CD4-positive, alpha-beta T cell (primary cell): ENCODE measurements at regions of chr16 and their contacts with region 1.

Region 1: DNA sequence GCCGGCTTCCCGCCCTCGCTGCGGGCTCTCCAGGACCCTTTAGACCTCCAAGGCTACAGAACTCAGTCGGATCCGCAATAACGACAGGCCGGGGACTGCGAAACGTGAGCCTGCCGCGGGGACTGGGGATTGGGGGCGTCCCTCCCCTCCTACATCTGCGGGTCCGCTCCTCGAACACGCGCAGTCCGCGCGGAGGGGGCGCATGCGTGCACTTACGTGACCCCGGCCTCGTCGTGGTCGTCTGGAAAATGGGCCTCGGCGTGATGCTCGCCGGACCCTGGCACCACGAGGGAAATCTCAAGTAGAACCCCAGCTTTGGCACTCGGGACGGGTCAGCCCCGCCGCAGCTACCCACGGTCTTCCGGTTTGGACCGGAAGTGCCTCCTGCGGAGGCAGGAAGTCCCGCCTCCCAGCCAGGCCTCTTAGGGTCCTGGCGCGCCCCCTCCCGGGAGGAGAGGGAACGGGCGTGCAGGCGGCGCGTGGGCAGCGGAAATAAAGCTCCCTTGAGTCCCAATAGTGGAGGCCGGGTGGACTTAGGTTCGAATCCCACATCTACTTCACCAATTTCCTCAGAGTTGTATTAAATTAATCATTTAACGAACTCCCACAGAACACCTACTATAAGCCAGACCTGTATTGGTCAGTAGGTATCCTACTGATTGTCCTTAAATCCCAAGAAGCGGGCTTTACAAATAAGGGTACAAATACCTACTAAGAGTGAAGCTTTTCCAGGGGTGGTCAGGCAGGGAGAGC is at the start of gene TAF1C:
- DNase-seq: peak; percentile 78 to 97 (median 88)
- ATAC-seq: peak; percentile 95
- H3K4me3 ChIP-seq: peak within 1 kb of the TSS; percentile 71
- H3K4me3 Mint-ChIP-seq: peak within 1 kb of the TSS; percentile 96
- H3K27ac ChIP-seq: peak within 1 kb of the TSS; percentile 60 to 72
- H3K27ac Mint-ChIP-seq: peak within 1 kb of the TSS; percentile 88
- H3K4me1 ChIP-seq: peaks cover 24% of the 10 kb centered on the region
- H3K4me1 Mint-ChIP-seq: peaks cover 29% of the 10 kb centered on the region
- H3K27me3 ChIP-seq: no peaks in the 10 kb centered on the region
- H3K27me3 Mint-ChIP-seq: no peaks in the 10 kb centered on the region
- CTCF ChIP-seq: peak; percentile 94
- total RNA-seq, gene TAF1C: 75.6 to 82.1 TPM

Region 2: GRCh38 chr16:83807710-83808572 is 378.9 kb before region 1 on chr16 and contains the start of gene HSBP1:
- CTCF ChIA-PET with region 1: interaction called, 4 read pairs
- POLR2A ChIA-PET with region 1: interaction called, 6 read pairs
- intact Hi-C with region 1: loop called in 1 of 2 experiments (anchors 5 kb)
- DNase-seq: peak; percentile 89 to 96 (median 91)
- ATAC-seq: peak; percentile 99
- H3K4me3 ChIP-seq: peak within 1 kb of the TSS; percentile 86
- H3K4me3 Mint-ChIP-seq: peak within 1 kb of the TSS; percentile 100
- H3K27ac ChIP-seq: peak within 1 kb of the TSS; percentile 46 to 74
- H3K27ac Mint-ChIP-seq: peak within 1 kb of the TSS; percentile 93
- H3K4me1 ChIP-seq: peaks cover 28% of the 10 kb centered on the region
- H3K4me1 Mint-ChIP-seq: peaks cover 43% of the 10 kb centered on the region
- H3K27me3 ChIP-seq: no peaks in the 10 kb centered on the region
- H3K27me3 Mint-ChIP-seq: no peaks in the 10 kb centered on the region
- CTCF ChIP-seq: no peak
- total RNA-seq, gene HSBP1: 17.4 to 21.9 TPM

Region 3: DNA sequence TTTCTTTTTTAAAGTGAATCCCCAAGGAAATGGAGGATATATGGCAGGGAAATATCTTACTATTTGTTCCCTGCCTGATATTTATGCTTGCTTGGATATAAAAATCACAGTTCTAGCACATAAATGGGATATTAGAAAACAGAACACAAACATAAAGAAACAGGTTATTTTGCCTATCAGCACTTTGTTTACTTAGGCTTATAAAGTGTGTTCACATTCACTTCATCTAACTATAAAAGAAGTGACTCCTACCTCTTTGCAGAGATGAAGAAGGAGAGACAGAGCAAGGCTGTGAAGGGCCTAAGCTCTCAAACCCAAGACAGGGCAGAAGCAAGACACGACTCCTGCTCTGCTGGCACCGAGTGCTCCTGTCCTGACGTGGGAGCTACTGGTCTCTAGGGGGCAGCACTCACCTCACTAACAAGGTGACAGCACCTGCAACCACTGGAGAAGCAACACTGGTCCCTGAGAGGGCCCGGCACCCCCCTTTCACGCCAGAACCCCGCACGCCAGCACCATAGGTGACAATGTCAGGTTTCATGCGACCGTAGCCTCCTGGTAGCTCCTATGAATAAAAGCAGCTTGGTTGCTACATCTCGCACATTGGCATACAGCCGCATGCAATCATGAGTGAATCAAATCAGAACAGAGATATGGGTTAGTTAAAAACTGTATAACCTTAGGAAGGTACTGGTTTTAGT is 102.1 kb before region 1 on chr16:
- CTCF ChIA-PET with region 1: interaction called, 65 read pairs
- POLR2A ChIA-PET with region 1: interaction called, 8 read pairs
- intact Hi-C with region 1: loop called (anchors 1 kb)
- DNase-seq: peak; percentile 50 to 87 (median 64)
- ATAC-seq: peak; percentile 85
- H3K4me3 ChIP-seq: no peak overlapping the region
- H3K4me3 Mint-ChIP-seq: peak overlapping the region; percentile 42
- H3K27ac ChIP-seq: no peak overlapping the region
- H3K27ac Mint-ChIP-seq: peak overlapping the region; percentile 63
- H3K4me1 ChIP-seq: peaks cover 28% of the 10 kb centered on the region
- H3K4me1 Mint-ChIP-seq: peaks cover 48% of the 10 kb centered on the region
- H3K27me3 ChIP-seq: no peaks in the 10 kb centered on the region
- H3K27me3 Mint-ChIP-seq: no peaks in the 10 kb centered on the region
- CTCF ChIP-seq: peak; percentile 81

Region 4: DNA sequence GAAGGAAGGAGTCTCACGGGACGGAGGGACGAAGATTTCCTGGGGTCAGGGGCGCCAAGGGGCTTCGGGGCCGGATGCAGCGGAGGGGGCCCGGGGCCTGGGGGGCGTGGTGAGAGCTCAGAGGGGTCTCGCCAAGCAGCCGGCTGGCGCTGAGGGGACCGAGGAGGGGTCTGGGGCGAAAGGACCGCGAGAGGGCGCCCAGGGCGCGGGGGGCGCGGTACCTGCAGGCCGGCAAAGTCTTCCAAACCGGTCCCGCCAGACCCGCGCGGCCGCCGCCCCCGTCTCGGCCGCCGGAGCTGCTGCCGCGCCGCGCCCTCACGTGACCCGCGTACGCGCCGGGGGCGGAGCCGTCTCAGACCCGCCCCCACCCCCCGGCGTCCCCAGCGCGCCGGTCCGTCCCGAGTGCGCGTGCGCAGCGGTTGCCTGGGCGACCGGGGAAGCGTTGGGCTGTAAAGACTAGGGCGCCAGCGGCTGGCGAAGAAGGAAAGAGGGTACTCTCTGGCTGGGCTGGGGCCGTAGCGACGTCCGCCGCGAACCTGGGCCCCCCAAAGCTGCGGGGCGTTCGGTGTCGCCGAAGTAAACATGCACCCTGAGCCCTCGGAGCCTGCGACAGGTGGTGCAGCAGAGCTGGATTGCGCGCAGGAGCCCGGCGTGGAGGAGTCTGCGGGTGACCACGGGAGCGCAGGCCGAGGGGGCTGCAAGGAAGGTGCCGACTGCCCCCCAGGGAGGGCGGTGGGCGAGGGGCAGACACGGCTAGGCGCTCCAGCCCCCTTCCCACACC is 41.8 kb before region 1 on chr16 and contains the starts of genes DNAAF1 and HSDL1:
- CTCF ChIA-PET with region 1: interaction called, 16 read pairs
- POLR2A ChIA-PET with region 1: interaction called, 5 read pairs
- intact Hi-C with region 1: loop called in 1 of 2 experiments (anchors 1 kb)
- DNase-seq: peak; percentile 87 to 98 (median 95)
- ATAC-seq: peak; percentile 81
- H3K4me3 ChIP-seq: peak within 1 kb of the TSS; percentile 79
- H3K4me3 Mint-ChIP-seq: peak within 1 kb of the TSS; percentile 93
- H3K27ac ChIP-seq: peak within 1 kb of the TSS in 1 of 2 donors; percentile 59
- H3K27ac Mint-ChIP-seq: peak within 1 kb of the TSS; percentile 85
- H3K4me1 ChIP-seq: peaks cover 20% of the 10 kb centered on the region
- H3K4me1 Mint-ChIP-seq: peaks cover 18% of the 10 kb centered on the region
- H3K27me3 ChIP-seq: peaks cover 0 to 7% of the 10 kb centered on the region in 2 experiments
- H3K27me3 Mint-ChIP-seq: no peaks in the 10 kb centered on the region
- CTCF ChIP-seq: no peak
- total RNA-seq, gene DNAAF1: not detected
- total RNA-seq, gene HSDL1: 9.4 to 12.1 TPM

Region 5: DNA sequence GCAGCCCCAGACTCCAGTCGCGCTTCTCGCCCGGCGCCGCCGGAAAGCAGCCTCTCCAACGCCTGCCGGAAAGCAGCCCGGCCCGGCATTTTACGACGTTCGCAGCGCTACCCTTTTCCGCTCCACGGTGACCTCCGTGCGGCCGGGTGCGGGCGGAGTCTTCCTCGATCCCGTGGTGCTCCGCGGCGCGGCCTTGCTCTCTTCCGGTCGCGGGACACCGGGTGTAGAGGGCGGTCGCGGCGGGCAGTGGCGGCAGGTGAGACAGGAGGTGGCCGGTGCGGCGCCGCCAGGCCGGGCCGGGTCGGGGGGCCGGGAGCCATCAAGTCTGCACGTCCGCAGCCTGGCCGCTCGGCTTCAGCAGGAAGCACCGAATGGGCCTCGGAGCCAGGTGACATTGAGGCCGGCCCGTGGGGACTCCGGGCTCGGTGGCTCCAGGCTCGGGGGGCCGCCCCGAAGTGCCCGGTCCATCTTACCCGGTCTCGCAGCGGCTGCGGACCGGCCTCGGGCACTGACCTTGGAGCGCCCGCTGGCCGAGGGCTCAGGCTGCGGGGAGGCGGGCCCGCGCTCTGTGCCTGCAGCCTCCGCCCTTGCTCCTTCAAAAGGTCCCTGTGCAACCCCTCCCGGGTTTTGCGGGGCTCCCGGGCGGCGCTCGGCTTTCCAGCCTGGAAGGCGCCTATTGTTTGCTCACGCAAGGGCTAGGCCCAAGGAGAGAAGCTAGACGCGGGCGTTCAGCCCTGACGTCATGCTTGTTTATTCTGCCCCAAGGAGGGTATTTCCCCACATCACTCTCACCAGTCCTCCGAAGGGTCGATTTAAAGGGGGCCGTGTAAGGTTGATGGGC is 1612.9 kb after region 1 on chr16 and contains the starts of genes COX4I1 and EMC8:
- CTCF ChIA-PET with region 1: no interaction called
- POLR2A ChIA-PET with region 1: no interaction called
- intact Hi-C with region 1: loop called in 1 of 2 experiments (anchors 10 kb)
- DNase-seq: peak; percentile 85 to 96 (median 90)
- ATAC-seq: peak; percentile 79
- H3K4me3 ChIP-seq: peak within 1 kb of the TSS; percentile 84
- H3K4me3 Mint-ChIP-seq: peak within 1 kb of the TSS; percentile 97
- H3K27ac ChIP-seq: peak within 1 kb of the TSS; percentile 61 to 95
- H3K27ac Mint-ChIP-seq: peak within 1 kb of the TSS; percentile 99
- H3K4me1 ChIP-seq: peaks cover 40% of the 10 kb centered on the region
- H3K4me1 Mint-ChIP-seq: peaks cover 78% of the 10 kb centered on the region
- H3K27me3 ChIP-seq: no peaks in the 10 kb centered on the region
- H3K27me3 Mint-ChIP-seq: no peaks in the 10 kb centered on the region
- CTCF ChIP-seq: no peak
- total RNA-seq, gene COX4I1: 749 to 750 TPM
- total RNA-seq, gene EMC8: 38.9 to 41.7 TPM